ENCODE measurements at regions of chr2 and their contacts with region 1.

Region 1: GRCh38 chr2:160324161-160324800 is 124.2 kb upstream of the ITGB6 start:
- DNase-seq: peak; percentile 65 to 70
- H3K4me3 ChIP-seq: no peak overlapping the region
- H3K27ac ChIP-seq: no peak overlapping the region
- H3K4me1 ChIP-seq: peaks cover 0 to 45% (median 17%) of the 10 kb centered on the region in 4 donors
- H3K27me3 ChIP-seq: no peaks in the 10 kb centered on the region
- CTCF ChIP-seq: peak; percentile 67 to 69

Region 2: DNA sequence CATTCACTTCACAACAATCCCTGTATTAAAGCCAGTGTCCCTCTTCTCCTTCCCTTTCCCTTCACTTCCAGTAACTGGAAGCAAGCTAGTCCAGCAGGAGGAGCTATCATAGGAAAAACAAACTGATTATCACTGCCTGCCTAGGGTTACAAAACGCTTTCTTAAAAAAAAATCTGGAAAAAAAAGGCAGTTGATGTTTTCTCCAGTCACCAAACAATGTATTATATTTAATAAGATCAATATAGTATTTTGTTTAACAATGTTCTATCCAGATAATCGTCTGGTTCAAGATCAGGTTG is 45.5 kb before region 1 on chr2:
- intact Hi-C with region 1: no loop called
- DNase-seq: no peak
- H3K4me3 ChIP-seq: no peak overlapping the region
- H3K27ac ChIP-seq: peak overlapping the region in 1 of 2 donors; percentile 39
- H3K4me1 ChIP-seq: peaks cover 0 to 18% (median 0%) of the 10 kb centered on the region in 4 donors
- H3K27me3 ChIP-seq: no peaks in the 10 kb centered on the region
- CTCF ChIP-seq: peak; percentile 37 to 38

Region 3: DNA sequence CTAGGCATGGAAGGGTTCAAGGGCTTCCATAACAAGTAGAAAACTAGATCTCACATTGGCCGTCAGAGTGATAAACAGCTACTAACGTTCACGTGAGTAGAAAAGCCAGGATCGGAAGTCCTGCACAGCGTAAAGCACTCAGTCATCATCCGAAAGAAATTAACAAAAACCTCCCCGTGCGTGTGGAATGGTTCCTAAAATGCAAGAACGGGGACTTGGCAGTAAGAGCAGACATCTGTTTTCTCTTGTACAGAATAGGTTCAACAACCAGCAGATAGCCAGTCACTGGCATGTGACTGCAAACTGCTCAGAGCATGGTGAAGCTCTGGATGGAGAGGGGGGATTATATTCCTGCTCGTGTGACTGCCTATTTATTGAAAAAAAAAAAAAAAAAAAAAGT is 17.3 kb before region 1 on chr2:
- intact Hi-C with region 1: no loop called
- DNase-seq: peak in 1 of 2 donors; percentile 50
- H3K4me3 ChIP-seq: no peak overlapping the region
- H3K27ac ChIP-seq: peak overlapping the region in 1 of 2 donors; percentile 7
- H3K4me1 ChIP-seq: peaks cover 0 to 44% (median 14%) of the 10 kb centered on the region in 4 donors
- H3K27me3 ChIP-seq: no peaks in the 10 kb centered on the region
- CTCF ChIP-seq: no peak

Region 4: DNA sequence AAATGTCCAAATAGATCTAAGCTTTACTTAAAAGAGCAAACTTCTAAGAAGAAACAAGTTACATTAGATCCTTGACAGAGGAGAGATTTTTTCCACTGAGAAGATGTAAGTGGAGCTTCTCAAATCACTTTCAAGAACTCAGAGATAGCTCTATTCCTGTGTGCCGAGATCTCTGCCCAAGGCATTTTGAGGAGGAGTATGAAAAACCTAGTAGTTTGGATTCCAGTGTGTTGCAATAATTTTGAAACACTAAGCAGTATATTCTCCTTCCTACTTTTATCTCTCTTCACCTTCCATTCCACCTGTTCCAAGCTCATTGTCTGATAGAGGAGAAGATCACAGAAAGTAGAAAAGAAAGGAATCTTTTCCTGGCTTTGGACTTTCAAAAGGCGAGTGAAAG is 643.9 kb after region 1 on chr2:
- intact Hi-C with region 1: loop called (anchors 5 kb)
- DNase-seq: no peak
- H3K4me3 ChIP-seq: no peak overlapping the region
- H3K27ac ChIP-seq: no peak overlapping the region
- H3K4me1 ChIP-seq: peaks cover 0 to 4% (median 2%) of the 10 kb centered on the region in 4 donors
- H3K27me3 ChIP-seq: no peaks in the 10 kb centered on the region
- CTCF ChIP-seq: no peak